SK-N-SH (cell line): ENCODE measurements at regions of chr3 and their contacts with region 1.

Region 1: GRCh38 chr3:194592798-194593752 is 40.1 kb downstream of the TMEM44 start:
- DNase-seq: peak; percentile 68
- H3K4me3 ChIP-seq: no peak overlapping the region
- H3K27ac ChIP-seq: peak overlapping the region in 1 of 2 experiments; percentile 94; a peak in 2 of 4 replicates
- H3K4me1 ChIP-seq: peaks cover 8 to 14% of the 10 kb centered on the region in 2 experiments; a peak in 2 of 4 replicates
- H3K27me3 ChIP-seq: no peaks in the 10 kb centered on the region
- CTCF ChIP-seq: no peak; the same call in 1 of the 2 replicates
- EP300 ChIP-seq: peak; percentile 65 to 99
- RAD21 ChIP-seq: peak; percentile 15; the same call in 1 of the 2 replicates

Region 2: GRCh38 chr3:194486540-194487288 is 106.4 kb before region 1 on chr3 and contains the start of gene ATP13A3:
- CTCF ChIA-PET with region 1: interaction called, 15 read pairs
- POLR2A ChIA-PET with region 1: no interaction called
- DNase-seq: peak; percentile 99
- H3K4me3 ChIP-seq: peak within 1 kb of the TSS; percentile 60 to 95
- H3K27ac ChIP-seq: peak within 1 kb of the TSS; percentile 56 to 84
- H3K4me1 ChIP-seq: peaks cover 8 to 25% of the 10 kb centered on the region in 2 experiments
- H3K27me3 ChIP-seq: no peaks in the 10 kb centered on the region
- CTCF ChIP-seq: no peak
- EP300 ChIP-seq: peak in 1 of 2 experiments; percentile 44; a peak in 1 of 4 replicates
- RAD21 ChIP-seq: no peak
- polyA plus RNA-seq, gene ATP13A3: 48.2 and 67.2 TPM in 2 replicates

Region 3: GRCh38 chr3:194604834-194605233 is 11.8 kb after region 1 on chr3:
- CTCF ChIA-PET with region 1: interaction called, 31 read pairs
- POLR2A ChIA-PET with region 1: no interaction called
- DNase-seq: no peak
- H3K4me3 ChIP-seq: no peak overlapping the region
- H3K27ac ChIP-seq: no peak overlapping the region
- H3K4me1 ChIP-seq: peaks cover 0 to 7% of the 10 kb centered on the region in 2 experiments; a peak in 1 of 4 replicates
- H3K27me3 ChIP-seq: no peaks in the 10 kb centered on the region
- CTCF ChIP-seq: peak; percentile 51
- EP300 ChIP-seq: no peak
- RAD21 ChIP-seq: peak; percentile 12; the same call in 1 of the 2 replicates